AG04449 (cell line): ENCODE measurements at regions of chr14 and their contacts with region 1.

Region 1: GRCh38 chr14:20343092-20343861 is at the start of gene PARP2:
- DNase-seq: peak; percentile 98
- H3K4me3 ChIP-seq: peak within 1 kb of the TSS; percentile 88
- CTCF ChIP-seq: no peak

Region 2: GRCh38 chr14:20215196-20215595 is 128.1 kb before region 1 on chr14:
- CTCF ChIA-PET with region 1: no interaction called
- POLR2A ChIA-PET with region 1: no interaction called
- DNase-seq: no peak
- H3K4me3 ChIP-seq: no peak overlapping the region
- CTCF ChIP-seq: no peak

Region 3: GRCh38 chr14:20327005-20327869 is 16.0 kb before region 1 on chr14:
- CTCF ChIA-PET with region 1: interaction called, 90 read pairs
- POLR2A ChIA-PET with region 1: interaction called, 17 read pairs
- DNase-seq: no peak
- H3K4me3 ChIP-seq: no peak overlapping the region
- CTCF ChIP-seq: peak; percentile 40

Region 4: GRCh38 chr14:20332788-20333493 is 10.3 kb before region 1 on chr14 and contains the start of gene CCNB1IP1:
- CTCF ChIA-PET with region 1: interaction called, 90 read pairs
- POLR2A ChIA-PET with region 1: interaction called, 17 read pairs
- DNase-seq: peak; percentile 67
- H3K4me3 ChIP-seq: peak within 1 kb of the TSS; percentile 76
- CTCF ChIP-seq: no peak

Region 5: DNA sequence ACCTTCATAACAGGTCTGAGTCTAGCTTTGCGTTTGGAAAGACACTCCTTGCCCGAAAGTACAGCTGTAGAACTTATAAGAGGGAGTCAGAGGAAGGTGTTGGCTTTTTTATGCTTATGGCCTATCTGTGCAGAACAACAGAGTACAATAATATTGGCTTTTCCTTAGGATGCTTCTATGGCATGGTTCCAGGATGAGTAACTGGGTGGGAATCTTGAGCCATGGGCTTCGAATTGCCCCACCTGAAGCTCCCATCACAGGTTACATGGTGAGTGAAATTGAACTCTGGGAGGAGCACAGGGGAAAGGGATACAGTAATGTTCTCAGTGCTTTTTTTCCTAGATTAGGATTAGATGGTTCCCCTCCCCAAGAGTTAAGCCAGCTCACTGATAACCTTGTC is 13.1 kb after region 1 on chr14:
- CTCF ChIA-PET with region 1: interaction called, 14 read pairs
- POLR2A ChIA-PET with region 1: interaction called, 3 read pairs
- DNase-seq: no peak
- H3K4me3 ChIP-seq: no peak overlapping the region
- CTCF ChIP-seq: no peak

Region 6: DNA sequence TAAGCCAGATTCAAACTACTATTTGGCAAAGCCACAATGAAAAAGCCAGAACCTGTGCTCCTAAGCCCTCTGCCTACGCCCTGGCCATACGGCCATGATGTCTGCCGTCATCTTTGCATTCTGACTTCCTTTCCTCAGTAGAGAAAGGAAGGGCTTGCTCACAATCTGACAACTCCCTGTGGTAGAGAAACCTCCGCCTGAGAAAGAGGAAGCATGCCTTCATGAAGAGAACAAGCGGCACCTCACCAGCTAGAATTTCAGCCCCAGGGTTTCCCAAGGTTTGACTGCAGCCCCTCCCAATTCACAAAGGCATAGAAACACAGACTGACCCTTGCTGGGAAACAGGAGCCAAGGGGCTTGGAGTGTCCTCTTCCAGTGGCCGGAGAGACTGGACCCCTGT is 44.3 kb after region 1 on chr14:
- CTCF ChIA-PET with region 1: no interaction called
- POLR2A ChIA-PET with region 1: no interaction called
- DNase-seq: no peak
- H3K4me3 ChIP-seq: no peak overlapping the region
- CTCF ChIP-seq: no peak

Region 7: DNA sequence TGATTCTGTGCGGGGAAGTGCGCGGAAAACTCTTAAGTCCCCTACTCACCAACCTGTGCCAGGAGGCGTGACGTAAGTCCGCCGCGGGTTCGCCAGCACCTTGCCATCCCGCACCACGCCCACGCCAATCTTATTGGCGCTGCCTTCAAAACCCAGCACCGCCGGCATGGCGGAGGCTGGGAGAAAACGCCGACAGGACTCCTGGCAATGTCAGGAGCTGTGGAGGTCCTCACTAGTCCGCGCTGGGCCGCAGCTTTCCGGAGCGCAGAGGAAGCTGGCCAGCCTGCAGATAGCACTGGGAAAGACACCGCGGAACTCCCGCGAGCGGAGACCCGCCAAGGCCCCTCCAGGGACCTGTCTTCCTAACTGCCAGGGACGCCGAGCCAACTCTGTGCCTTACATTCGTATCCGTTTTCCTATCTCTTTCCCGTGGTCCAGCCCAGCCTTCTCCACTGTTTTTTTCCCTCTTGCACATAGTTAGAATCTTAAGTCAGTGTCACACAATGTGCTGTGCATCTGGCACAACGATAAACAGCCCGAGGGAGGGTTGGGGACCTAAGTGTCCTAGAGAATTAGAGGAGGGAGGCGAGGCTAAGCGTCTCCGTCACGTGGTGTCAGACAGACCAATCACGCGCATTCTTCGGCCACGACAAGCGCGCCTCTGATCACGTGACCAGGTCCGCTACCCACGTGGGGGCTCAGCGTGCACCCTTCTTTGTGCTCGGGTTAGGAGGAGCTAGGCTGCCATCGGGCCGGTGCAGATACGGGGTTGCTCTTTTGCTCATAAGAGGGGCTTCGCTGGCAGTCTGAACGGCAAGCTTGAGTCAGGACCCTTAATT is 111.5 kb after region 1 on chr14 and contains the starts of genes APEX1 and OSGEP:
- CTCF ChIA-PET with region 1: no interaction called
- POLR2A ChIA-PET with region 1: interaction called, 12 read pairs
- DNase-seq: peak; percentile 90
- H3K4me3 ChIP-seq: peak within 1 kb of the TSS; percentile 96
- CTCF ChIP-seq: no peak

Region 8: DNA sequence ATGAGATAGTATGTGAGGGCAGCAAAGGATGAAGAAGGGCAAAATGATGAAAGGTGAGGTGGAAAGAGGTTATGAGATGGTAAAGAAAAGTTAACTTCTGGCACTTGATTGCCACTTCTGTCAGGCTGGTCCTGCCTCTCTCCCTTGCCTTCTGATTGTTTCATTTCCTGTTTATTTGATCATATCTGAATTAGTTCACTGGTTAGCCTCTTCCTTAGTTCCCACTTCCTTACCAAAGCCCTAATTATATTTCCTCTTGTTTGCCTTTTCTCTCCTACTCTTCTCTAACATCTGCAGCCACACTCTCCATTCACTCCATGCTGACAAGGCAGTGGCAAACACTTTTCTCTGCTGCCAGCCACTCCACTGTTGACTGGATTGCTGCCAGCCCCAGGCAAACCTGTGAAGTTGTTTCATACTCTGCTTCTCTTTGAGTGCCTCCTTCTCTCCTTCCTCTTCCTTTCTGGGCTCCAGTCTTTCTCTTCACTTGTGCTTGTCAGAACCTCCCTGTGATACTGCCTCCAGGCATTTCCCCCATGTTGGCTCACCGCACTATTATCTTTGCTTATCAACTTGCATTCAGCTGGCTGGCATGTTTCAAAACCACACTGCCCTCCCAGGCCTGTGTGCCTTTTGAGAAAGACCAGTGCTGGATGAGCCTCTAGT is 134.1 kb after region 1 on chr14:
- CTCF ChIA-PET with region 1: no interaction called
- POLR2A ChIA-PET with region 1: no interaction called
- DNase-seq: no peak
- H3K4me3 ChIP-seq: no peak overlapping the region
- CTCF ChIP-seq: no peak